Cardiac septum (tissue), 1 donor: ENCODE measurements at regions of chrX and their contacts with region 1.

Region 1: GRCh38 chrX:37755025-37755424 is 24.8 kb upstream of the CYBB start:
- DNase-seq: no peak

Region 2: GRCh38 chrX:37905436-37906147 is 150.6 kb after region 1 on chrX:
- intact Hi-C with region 1: loop called (anchors 10 kb)
- DNase-seq: no peak